ENCODE measurements at regions of chr2 and their contacts with region 1.

Region 1: DNA sequence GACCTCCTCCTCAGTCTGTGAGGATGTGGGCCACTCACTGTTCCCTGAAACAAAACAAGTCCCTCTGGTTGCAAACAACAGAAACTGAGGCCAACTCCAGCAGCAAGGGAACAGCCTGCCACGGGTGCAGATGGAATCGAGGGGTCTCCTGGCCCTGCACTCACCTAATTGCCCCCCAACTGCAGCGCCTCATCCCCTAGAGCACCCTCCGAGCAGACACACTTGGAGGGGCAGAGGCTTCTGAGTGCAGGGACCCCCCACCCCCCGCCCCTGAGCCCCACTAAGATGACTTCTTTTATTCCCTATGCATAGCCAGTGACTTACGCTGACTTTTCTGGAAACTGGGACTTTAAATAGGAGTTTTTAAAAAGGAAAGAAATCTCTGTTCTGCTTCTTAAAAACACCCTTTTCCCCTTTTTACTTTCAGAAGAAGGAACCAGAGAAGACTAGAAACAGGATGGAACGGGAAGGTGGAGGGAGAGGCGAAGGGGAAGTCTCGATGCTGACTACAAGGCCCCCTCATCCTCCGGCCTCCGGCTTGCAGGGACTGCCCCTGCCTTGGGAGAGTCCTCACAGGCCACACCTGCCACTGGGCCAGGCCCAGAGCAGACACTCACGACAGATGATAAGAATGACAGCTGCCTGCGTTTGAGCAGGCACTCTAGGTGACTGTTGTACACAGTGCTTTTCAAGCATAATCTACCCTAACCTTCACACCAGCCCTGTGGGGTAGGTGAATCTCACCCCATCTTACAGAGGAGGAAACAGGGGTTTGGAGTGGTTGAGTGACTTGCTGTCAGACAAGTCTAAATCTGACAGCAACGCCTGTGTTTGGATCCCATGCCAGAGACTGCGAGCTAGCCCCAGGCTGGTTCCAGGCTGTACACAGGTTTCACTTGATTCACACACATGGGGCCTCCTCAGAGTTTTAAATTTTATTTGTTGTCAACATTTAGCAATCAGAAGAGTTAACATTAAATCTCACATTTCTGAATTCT is 28.2 kb upstream of the BIN1 start:
- H3K4me3 Mint-ChIP-seq: peak overlapping the region; percentile 8
- H3K27ac Mint-ChIP-seq: peak overlapping the region; percentile 71
- H3K4me1 Mint-ChIP-seq: peaks cover 51% of the 10 kb centered on the region
- H3K27me3 Mint-ChIP-seq: peaks cover 19% of the 10 kb centered on the region

Region 2: GRCh38 chr2:127086990-127087790 is 47.9 kb before region 1 on chr2:
- intact Hi-C with region 1: loop called (anchors 10 kb)
- H3K4me3 Mint-ChIP-seq: peak overlapping the region; percentile 34
- H3K27ac Mint-ChIP-seq: peak overlapping the region; percentile 73
- H3K4me1 Mint-ChIP-seq: peaks cover 63% of the 10 kb centered on the region
- H3K27me3 Mint-ChIP-seq: peaks cover 50% of the 10 kb centered on the region

Region 3: GRCh38 chr2:127174136-127174535 is 39.0 kb after region 1 on chr2:
- intact Hi-C with region 1: loop called (anchors 5 kb)
- H3K4me3 Mint-ChIP-seq: no peak overlapping the region
- H3K27ac Mint-ChIP-seq: no peak overlapping the region
- H3K4me1 Mint-ChIP-seq: peaks cover 60% of the 10 kb centered on the region
- H3K27me3 Mint-ChIP-seq: no peaks in the 10 kb centered on the region

Measured in dendritic cell treated with granulocyte-macrophage colony-stimulating factor and Interleukin-4, amounts not matched to agents 40 ng/mL and 50 ng/mL, for 4 days (primary cell).